ENCODE measurements at regions of chr15 and their contacts with region 1.

Region 1: DNA sequence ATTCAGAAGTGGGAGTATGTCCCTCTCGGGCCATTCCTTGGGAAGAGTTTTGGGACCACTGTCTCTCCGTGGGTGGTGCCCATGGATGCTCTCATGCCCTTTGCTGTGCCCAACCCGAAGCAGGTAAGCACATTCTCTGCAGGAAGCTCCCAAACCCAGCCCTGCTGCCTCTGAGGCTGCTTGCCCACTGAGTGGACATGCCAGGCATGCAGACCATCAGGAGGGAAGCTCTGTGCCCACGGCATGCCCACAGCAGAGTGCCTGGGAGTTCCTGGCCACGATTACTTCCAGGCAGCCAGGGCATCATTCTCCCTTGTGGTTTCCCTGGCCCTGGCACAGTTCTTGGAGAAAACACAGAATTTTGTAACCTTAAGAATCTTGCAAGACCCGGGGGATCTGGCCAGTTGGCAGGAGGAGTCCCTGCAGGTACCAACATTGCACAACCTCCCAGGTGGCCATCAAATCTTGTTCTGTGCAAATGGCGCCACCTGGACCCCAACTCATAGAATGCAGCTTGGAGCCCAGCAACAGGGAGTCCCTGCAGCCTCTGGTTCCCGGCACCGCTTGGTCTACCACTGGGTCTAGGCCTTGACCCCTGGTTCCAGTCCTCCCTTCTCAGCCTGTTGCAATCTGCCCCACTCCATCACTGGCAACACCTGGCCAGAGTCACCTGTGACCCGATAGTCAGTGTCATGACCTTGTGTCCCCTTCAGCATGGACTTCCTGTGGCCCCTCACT is 20.4 kb downstream of the FAH start:
- DNase-seq: peak; percentile 65
- H3K4me3 ChIP-seq: no peak overlapping the region
- H3K27ac ChIP-seq: no peak overlapping the region
- H3K4me1 ChIP-seq: peaks cover 18% of the 10 kb centered on the region
- H3K27me3 ChIP-seq: no peaks in the 10 kb centered on the region
- CTCF ChIP-seq: peak; percentile 56 to 88

Region 2: DNA sequence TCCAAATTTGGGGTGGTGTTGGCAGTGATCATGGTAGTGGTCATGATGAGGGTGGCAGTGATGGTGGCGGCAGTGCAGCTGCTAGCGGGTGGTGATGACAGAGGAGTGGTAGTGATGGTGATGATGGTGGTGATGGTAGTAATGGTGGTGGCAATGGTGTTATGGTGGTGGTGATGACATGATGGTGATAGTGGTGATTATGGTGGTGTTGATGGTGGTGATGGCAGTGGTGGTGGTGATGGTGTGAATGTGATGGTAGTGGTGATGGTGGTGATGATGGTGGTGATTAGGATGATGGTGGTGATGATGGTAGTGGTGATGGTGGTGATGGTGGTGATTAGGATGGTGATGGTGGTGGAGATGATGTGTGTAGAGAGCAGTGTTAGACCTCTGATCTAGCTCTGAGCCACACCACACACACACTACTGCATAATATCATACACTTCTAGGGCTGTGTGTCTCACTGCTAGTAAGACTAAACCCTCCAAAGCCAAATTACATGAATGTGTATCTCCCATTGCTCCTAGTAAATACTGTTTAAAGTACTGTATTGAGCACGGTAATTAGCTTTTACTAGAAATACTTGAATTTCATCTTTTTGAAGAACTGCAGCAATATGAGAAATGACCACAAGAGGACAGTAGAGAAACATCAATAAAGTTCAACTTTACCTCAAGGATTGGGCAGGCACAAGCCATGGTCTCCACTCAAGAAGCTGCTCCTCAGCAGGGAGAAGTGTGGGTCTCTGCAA is 833.5 kb before region 1 on chr15:
- CTCF ChIA-PET with region 1: no interaction called
- dilution Hi-C with region 1: no loop called
- in situ Hi-C with region 1: no loop called
- intact Hi-C with region 1: loop called (anchors 1 kb)
- DNase-seq: peak; percentile 8
- H3K4me3 ChIP-seq: no peak overlapping the region
- H3K27ac ChIP-seq: no peak overlapping the region
- H3K4me1 ChIP-seq: no peaks in the 10 kb centered on the region
- H3K27me3 ChIP-seq: no peaks in the 10 kb centered on the region
- CTCF ChIP-seq: peak; percentile 92 to 95

Region 3: DNA sequence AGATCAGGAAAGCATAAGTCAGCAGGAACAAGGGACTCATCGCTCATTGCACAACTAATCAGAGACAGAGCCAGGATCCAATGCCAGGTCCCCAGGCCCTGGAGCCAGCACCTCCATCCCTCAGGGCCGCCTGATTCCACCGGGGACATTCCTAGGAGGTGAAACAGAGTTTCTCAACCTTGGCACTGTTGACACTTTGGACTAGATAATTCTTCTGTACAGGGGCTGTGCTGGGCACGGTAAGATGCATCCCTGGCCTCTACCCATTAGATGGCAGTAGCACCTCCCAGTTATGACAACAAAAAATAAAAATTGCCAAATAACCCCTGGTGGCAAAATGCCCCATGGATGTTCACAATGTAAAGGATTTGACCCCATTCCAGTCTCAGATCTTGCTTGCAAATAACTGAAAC is 404.1 kb before region 1 on chr15:
- CTCF ChIA-PET with region 1: no interaction called
- dilution Hi-C with region 1: no loop called
- in situ Hi-C with region 1: no loop called
- intact Hi-C with region 1: loop called (anchors 5 kb)
- DNase-seq: peak; percentile 26
- H3K4me3 ChIP-seq: no peak overlapping the region
- H3K27ac ChIP-seq: no peak overlapping the region
- H3K4me1 ChIP-seq: no peaks in the 10 kb centered on the region
- H3K27me3 ChIP-seq: no peaks in the 10 kb centered on the region
- CTCF ChIP-seq: peak; percentile 36 to 65

Region 4: DNA sequence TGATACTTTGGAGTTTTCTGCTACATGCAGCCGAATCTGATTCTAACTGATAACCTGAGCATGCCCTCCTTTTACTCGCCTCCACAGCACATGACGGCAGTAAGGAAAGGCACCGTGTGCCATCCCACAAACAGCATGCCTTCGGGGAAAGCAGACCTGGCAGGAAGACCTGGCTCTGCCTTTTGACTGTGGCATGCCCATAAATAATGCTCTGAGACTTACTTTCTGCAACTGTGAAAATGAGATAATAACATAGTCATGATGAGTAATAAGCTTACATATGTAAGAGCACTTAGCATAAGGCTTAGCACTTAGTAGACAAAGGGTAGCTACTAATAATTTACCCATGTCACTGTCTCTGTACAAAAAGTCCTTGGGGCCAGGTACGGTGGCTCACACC is 309.3 kb before region 1 on chr15:
- CTCF ChIA-PET with region 1: no interaction called
- dilution Hi-C with region 1: no loop called
- in situ Hi-C with region 1: loop called in 1 of 2 experiments (anchors 10 kb)
- intact Hi-C with region 1: no loop called
- DNase-seq: peak; percentile 76
- H3K4me3 ChIP-seq: no peak overlapping the region
- H3K27ac ChIP-seq: no peak overlapping the region
- H3K4me1 ChIP-seq: peaks cover 11% of the 10 kb centered on the region
- H3K27me3 ChIP-seq: no peaks in the 10 kb centered on the region
- CTCF ChIP-seq: no peak

Region 5: DNA sequence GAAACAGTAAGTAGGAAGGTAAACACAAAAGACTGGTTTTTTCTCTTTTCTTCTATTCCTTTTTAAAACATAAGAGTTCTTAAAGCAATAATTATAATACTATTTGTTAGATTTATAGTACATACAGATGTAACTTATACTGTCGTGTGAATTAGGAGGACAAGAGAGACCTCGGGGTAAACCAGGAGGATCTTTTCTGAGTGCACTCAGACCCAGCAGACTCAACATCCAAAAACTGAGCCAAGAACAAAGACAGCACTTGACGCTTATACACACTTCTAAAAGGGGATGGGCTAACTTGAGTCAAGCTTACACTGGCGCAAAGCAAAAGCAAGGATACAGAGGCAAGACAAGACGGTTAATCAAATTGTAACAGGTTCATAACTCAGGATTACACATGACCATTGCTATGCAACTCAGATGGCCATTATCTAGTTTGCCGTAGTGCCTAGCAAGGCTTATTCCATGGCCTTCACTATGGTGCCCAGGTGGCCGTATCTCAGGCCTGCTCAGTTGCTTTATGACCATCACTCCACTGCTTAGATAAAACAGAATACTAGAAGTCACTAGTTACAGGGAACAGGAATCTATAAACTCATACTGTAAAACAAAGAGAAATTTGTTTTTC is 295.0 kb before region 1 on chr15:
- CTCF ChIA-PET with region 1: no interaction called
- dilution Hi-C with region 1: no loop called
- in situ Hi-C with region 1: no loop called
- intact Hi-C with region 1: no loop called
- DNase-seq: no peak
- H3K4me3 ChIP-seq: no peak overlapping the region
- H3K27ac ChIP-seq: no peak overlapping the region
- H3K4me1 ChIP-seq: peaks cover 13% of the 10 kb centered on the region
- H3K27me3 ChIP-seq: no peaks in the 10 kb centered on the region
- CTCF ChIP-seq: no peak

Region 6: DNA sequence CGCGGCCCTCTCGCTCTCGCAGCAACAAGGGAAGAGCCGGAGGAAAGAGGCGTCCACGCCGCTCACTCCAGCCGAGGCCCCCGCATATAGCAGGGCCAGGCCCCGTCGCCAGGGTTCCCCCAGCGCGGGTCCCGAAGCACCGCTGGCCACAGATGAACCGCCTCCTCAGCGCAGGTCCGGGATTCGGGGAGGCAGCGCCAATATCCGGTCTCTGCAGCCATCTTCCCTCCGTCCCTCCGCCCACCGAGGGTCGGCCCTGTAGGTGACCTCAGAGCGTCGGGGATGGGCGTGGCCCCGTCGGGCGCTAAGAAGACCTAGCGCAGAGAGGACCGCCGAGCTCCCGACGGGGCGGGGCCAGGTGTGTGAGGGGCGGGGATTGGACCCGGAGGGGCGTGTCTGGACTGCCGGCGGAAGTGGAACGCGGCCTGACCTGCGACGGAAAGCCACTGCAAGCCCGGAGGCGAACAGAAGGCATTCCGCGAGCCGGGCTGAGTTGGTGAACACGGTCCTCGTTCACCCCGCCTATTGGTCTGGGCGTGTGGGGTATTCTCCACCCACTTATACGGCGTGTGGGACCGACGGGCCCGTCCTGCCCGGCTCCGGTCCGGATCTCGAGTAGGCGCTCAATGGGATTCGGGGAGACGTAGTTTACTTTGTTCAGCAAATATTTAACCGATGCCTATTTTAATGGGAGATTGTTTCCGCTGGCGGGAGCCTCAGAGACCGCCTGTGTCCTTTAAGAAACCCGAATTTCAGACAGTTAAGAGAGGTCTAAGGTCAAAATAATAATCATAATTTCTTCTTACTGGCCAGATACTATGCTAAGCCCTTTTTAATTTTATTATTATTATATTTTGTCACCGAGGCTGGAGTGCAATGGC is 249.4 kb before region 1 on chr15:
- CTCF ChIA-PET with region 1: no interaction called
- dilution Hi-C with region 1: no loop called
- in situ Hi-C with region 1: no loop called
- intact Hi-C with region 1: loop called (anchors 2 kb)
- DNase-seq: peak; percentile 97
- H3K4me3 ChIP-seq: peak overlapping the region; percentile 92 to 99 (median 95)
- H3K27ac ChIP-seq: peak overlapping the region; percentile 78
- H3K4me1 ChIP-seq: no peaks in the 10 kb centered on the region
- H3K27me3 ChIP-seq: no peaks in the 10 kb centered on the region
- CTCF ChIP-seq: no peak

Region 7: DNA sequence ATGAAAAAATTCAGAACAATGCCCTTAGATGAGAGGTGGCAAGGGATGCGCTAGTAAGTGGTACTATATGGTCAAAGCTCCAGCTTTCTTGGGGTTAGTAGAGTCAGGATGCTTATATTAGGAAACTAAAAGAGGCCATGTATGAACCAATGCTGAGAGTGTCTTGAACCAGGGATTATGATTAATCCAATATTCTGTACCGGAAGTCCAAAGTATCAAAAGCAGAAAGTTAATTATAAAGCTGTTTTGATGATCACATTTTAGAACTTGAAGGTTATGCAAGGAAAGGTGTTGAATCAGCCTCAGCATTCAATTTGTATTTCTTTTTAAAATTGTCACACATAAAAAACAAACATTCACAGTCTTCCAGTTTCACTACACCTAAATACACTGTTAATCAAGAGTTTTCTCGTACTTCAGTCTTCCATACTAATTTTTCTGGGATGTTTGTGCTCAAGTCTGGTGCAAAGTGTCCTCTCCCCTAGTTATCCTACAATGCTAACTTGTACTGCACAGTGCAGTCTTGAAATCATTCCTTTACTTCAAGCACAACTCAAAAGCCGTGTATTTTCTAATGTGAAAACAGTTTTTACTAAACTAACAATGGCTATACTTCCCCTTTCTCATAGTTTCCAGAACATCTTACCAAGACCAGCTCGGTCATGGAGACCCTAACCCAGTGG is 31.1 kb before region 1 on chr15:
- CTCF ChIA-PET with region 1: no interaction called
- dilution Hi-C with region 1: no loop called
- in situ Hi-C with region 1: no loop called
- intact Hi-C with region 1: no loop called
- DNase-seq: no peak
- H3K4me3 ChIP-seq: no peak overlapping the region
- H3K27ac ChIP-seq: no peak overlapping the region
- H3K4me1 ChIP-seq: peaks cover 10% of the 10 kb centered on the region
- H3K27me3 ChIP-seq: no peaks in the 10 kb centered on the region
- CTCF ChIP-seq: no peak